Right ventricle myocardium inferior (tissue), 1 donor: ENCODE measurements at regions of chr19 and their contacts with region 1.

Region 1: GRCh38 chr19:3984908-3985642 is at the start of gene EEF2:
- DNase-seq: peak; percentile 96
- ATAC-seq: peak; percentile 74
- total RNA-seq, gene EEF2: 2,154 TPM

Region 2: DNA sequence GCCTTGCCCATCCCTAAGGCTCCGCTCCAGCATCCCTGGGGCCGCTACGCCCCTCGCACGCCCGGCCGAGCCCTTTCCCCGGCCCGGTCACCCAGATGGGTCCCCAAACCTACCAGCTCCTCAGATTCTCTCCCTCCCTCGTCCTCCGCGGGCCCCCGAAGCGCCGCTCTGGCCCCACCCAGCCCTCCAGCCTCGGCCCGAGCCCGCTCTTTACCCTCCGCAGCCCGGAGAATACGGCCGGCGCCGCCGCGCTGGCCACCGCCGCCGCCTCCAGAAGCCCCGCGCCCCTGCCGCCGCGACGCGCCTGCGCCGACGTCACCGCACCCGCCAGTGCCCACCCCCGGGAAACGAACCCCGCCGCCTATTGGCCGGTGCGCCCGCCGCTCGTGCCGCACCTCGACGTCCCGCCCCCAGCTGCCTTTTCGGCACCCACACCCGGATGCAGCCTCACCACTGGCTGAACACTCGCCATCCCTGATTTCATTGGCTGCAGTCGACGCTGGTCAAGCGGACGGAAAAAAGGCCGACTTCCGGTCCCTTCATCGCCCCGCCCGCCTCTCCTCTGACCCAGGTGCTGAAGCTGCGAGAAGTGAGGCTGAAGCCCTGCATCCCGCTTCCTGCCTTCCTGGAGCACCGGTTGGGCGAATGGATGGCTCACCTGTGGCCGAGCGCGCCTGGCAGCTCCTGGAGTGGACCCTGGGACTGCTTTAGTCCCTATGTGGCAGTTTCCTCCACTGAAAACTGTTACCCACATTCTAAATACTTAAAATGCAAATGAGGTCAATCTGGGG is 14.1 kb before region 1 on chr19 and contains the start of gene DAPK3:
- intact Hi-C with region 1: loop called (anchors 2 kb)
- DNase-seq: peak; percentile 97
- ATAC-seq: peak; percentile 88
- total RNA-seq, gene DAPK3: 67.5 TPM

Region 3: GRCh38 chr19:4123615-4124568 is 138.8 kb after region 1 on chr19 and contains the start of gene MAP2K2:
- intact Hi-C with region 1: loop called (anchors 10 kb)
- DNase-seq: peak; percentile 97
- ATAC-seq: peak; percentile 98
- total RNA-seq, gene MAP2K2: 138 TPM

Region 4: DNA sequence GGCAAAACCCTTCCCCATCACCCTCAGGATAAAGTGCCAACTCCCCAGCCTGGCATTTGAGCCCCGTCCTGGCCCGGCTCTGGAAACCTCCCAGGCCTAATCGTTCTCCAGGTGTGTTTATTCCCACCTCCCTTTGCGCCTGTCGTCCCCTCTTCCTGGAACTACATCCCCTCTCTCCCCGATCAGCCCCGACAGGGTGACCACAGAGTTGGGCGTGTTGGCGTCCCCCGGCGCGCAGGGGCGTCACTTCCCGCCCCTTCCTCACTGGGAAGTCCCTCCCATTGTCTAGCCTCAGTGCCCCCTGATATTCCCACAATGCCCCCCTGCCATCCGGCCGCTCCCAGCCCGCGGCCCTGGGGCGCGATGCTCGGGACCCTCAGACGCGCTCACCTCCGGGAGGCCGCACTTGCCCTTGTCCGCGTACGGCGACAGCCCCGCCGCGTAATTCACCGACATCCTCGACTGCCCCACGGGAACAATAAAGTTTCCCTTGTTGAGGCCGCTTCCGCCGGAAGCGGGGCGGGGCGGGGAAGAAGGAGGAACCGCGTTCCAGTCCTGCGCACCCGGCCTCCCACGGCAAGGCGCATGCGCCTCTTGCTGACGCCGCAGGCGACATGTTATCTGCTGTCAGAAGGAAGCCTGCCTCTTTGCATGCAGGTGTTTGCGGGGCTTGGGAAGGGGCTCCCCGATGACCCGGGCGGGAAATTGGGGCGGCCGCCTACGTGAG is 197.2 kb after region 1 on chr19 and contains the starts of genes ANKRD24 and SIRT6:
- intact Hi-C with region 1: loop called (anchors 5 kb)
- DNase-seq: peak; percentile 98
- ATAC-seq: peak; percentile 96
- total RNA-seq, gene ANKRD24: 0.19 TPM
- total RNA-seq, gene SIRT6: 10.4 TPM